HEK293 (cell line): ENCODE measurements at regions of chr7 and their contacts with region 1.

Region 1: GRCh38 chr7:142782922-142783900 is 12.4 kb downstream of the PRSS2 start:
- H3K4me3 ChIP-seq: peak overlapping the region; percentile 17
- H3K27ac ChIP-seq: no peak overlapping the region
- H3K4me1 ChIP-seq: no peaks in the 10 kb centered on the region
- CTCF ChIP-seq: peak; percentile 82

Region 2: DNA sequence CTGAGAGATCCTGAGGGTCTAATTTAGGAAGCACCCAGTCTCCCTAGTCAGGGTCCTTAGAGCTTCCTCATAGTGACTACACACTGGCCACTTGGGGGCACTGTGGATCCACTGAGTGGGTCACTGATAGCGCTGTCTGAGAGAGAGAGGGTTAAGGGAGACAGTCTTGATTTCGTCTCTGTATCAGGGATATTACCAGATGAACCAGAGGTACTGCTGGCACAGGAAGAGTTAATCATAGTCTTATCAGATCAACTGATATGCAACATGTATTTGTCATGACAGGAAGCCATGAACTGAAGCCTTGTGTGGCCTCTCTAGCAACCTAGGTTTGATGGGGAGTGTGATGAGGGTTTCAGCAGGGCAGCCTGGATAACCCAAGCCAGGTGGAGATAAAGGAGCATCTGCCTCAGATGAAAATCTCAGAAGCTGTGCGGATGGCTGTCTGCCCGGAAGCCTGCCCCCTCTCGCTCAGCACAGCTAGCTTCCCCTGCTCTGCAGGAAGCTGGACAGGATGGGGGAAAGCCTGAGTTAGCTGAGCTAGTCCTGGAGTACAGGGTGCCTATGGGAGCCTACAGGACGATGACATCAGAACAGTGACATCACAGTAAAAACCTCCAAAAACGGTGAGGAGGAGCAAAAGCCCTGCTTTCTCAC is 248.0 kb before region 1 on chr7:
- CTCF ChIA-PET with region 1: interaction called, 34 read pairs
- POLR2A ChIA-PET with region 1: interaction called, 3 read pairs
- H3K4me3 ChIP-seq: no peak overlapping the region
- H3K27ac ChIP-seq: no peak overlapping the region
- H3K4me1 ChIP-seq: no peaks in the 10 kb centered on the region
- CTCF ChIP-seq: peak; percentile 76

Region 3: DNA sequence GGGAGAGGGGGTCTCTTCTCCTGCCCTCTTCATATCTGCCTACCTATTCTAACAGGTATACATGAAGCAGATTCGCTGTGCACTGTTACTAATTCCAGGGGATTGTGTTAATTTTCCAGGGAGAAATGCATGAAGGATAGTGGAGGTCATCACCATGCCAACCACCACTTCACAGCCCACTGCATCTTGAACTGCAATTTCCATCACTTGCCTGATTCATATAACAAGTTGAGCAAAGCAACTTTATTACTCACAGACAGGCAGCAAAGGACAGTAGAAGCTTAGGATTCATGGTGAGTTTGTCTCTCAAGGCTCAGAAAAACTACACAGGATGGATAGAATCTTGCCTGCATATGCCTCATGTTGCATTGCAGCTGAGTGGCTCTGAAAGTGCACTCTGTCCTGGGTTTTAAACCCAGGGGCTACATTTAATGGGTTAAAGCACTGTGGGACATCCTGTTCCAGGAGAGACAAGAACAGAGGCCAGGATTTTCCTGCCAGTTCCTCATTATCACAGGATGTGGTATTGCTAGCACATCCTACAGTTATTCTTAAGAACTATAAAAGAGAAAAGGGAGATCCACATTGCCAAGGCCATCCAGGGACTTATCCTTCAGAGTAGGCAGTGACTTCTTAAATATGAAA is 170.9 kb before region 1 on chr7:
- CTCF ChIA-PET with region 1: interaction called, 13 read pairs
- POLR2A ChIA-PET with region 1: no interaction called
- H3K4me3 ChIP-seq: no peak overlapping the region
- H3K27ac ChIP-seq: no peak overlapping the region
- H3K4me1 ChIP-seq: no peaks in the 10 kb centered on the region
- CTCF ChIP-seq: no peak

Region 4: GRCh38 chr7:142642316-142642715 is 140.9 kb before region 1 on chr7:
- CTCF ChIA-PET with region 1: interaction called, 116 read pairs
- POLR2A ChIA-PET with region 1: no interaction called
- H3K4me3 ChIP-seq: no peak overlapping the region
- H3K27ac ChIP-seq: no peak overlapping the region
- H3K4me1 ChIP-seq: no peaks in the 10 kb centered on the region
- CTCF ChIP-seq: no peak

Region 5: DNA sequence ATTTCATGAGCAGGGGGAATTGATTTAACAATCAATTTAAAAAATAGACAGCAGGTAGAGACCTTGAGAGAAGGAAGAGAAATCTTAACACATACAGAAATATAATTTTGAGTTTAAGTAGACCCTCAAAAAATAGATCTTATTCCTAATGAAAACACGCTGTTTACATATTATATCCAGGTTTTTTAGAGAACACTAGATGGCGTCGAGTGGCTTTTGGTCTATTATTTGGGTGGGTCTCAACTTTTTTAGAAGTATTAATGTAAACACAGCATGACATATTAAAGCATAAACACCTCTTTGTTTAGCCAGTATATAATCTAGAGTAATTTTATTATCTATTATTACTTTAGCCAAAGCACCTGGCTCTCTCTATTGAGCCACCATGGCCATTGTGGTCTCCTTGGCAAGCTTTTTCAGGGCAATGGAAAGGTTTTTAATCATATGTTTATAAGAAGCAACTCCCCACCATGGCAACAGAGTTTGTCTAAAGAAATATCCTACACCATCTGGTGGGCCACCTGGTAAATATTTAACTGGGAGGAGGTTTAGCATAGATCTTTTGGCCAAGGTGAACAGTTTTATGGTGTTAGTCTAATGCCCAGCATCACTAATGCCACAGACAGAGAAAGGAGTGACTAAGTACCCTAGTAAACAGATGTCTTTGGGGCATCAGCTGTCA is 93.6 kb before region 1 on chr7:
- CTCF ChIA-PET with region 1: interaction called, 15 read pairs
- POLR2A ChIA-PET with region 1: no interaction called
- H3K4me3 ChIP-seq: no peak overlapping the region
- H3K27ac ChIP-seq: no peak overlapping the region
- H3K4me1 ChIP-seq: no peaks in the 10 kb centered on the region
- CTCF ChIP-seq: no peak

Region 6: DNA sequence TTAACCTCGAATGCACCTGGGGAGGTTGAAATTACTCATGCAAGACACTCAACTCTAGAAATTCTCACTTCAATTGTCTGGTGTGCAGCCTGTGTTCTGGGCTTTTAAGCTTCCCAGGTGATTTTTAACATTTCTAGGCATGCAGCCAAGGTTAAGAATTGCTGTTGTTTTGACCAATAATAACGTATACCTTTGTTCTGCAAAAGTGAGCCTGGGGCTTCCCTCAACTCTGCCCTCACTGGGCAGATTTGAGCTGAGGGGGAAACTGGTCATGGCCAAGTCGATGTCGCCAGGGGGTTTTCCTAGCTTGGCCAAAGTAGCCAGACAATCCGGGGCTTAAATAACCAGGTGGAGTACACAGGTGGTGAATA is 11.9 kb before region 1 on chr7:
- CTCF ChIA-PET with region 1: interaction called, 26 read pairs
- POLR2A ChIA-PET with region 1: no interaction called
- H3K4me3 ChIP-seq: no peak overlapping the region
- H3K27ac ChIP-seq: no peak overlapping the region
- H3K4me1 ChIP-seq: no peaks in the 10 kb centered on the region
- CTCF ChIP-seq: no peak

Region 7: GRCh38 chr7:142908921-142909890 is 126.0 kb after region 1 on chr7:
- CTCF ChIA-PET with region 1: no interaction called
- POLR2A ChIA-PET with region 1: no interaction called
- H3K4me3 ChIP-seq: no peak overlapping the region
- H3K27ac ChIP-seq: no peak overlapping the region
- H3K4me1 ChIP-seq: no peaks in the 10 kb centered on the region
- CTCF ChIP-seq: no peak